Psoas muscle (tissue), 8 donors: ENCODE measurements at regions of chr14 and their contacts with region 1.

Region 1: GRCh38 chr14:63174760-63175211 is 29.5 kb upstream of the RHOJ start:
- DNase-seq: no peak
- ATAC-seq: peak in 1 of 4 donors; percentile 57
- H3K4me3 ChIP-seq: no peak overlapping the region
- H3K27ac ChIP-seq: no peak overlapping the region
- H3K4me1 ChIP-seq: no peaks in the 10 kb centered on the region
- H3K27me3 ChIP-seq: peaks cover 0 to 3% (median 0%) of the 10 kb centered on the region in 3 donors
- CTCF ChIP-seq: peak; percentile 62

Region 2: DNA sequence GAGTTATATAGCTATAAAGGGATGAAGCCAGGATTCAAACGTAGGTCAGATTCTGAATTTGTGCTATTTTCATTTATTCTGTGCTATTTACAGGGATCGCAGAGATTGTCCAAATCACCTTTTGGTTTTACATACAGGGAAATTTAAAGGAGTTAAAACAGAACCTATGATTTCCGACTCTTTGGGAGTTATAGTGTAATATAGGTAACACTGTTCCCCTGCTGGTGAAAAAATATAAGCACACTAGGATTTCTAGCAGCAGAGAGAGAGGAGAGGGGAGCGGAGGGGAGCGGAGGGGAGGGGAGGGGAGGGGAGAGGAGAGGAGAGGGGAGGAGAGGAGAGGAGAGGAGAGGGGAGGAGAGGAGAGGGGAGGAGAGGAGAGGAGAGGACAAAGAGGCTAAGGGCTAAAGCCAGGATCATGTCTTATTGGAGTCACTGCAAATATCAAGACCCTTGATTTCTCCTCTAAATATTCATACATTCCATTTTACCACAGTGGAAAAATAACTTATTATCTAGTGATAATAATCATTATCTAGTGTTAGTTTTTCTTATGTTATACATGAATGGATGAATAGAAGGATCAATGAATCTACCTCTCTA is 83.3 kb before region 1 on chr14:
- intact Hi-C with region 1: no loop called
- DNase-seq: no peak
- ATAC-seq: no peak
- H3K4me3 ChIP-seq: no peak overlapping the region
- H3K27ac ChIP-seq: no peak overlapping the region
- H3K4me1 ChIP-seq: no peaks in the 10 kb centered on the region
- H3K27me3 ChIP-seq: no peaks in the 10 kb centered on the region
- CTCF ChIP-seq: no peak

Region 3: DNA sequence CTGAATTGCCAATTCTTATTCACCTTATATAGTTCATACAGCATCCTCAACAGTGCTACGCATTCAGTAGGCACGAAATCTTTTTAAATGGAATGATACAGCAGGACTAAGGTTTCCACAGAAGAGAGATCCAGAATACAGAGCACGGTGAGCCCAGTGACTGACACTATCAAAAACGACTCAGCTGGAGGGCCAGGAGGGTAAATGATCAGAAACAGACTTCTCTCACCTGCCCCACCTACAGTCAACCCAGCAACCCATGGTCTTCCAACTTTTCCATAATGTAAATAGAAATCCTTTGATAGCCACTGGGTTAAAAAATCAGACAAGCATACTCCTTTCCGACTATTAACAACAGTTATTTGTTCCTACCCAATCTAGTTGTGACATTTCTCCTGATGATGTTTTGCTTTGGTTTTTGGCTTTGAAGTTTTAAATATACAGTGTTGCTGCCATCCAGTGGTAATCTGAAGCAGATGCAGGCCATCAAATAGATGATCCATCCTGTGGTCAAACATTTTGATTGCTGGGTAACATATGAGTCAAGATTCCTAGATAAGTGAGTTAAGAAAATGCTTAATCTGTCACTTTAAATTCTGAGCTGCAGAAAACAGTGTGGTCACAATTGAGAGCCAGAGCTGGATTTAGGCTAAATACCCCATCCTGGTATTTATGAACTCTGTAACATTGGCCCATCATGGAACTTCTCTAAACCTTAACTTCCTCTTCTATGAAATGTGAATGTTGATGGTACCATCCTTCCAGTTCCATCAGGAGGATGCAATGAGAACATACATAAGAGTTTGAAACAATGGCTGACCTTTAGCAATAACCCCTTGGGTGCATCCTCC is 101.9 kb after region 1 on chr14:
- intact Hi-C with region 1: loop called (anchors 2 to 5 kb)
- DNase-seq: no peak
- ATAC-seq: peak in 1 of 4 donors; percentile 69
- H3K4me3 ChIP-seq: no peak overlapping the region
- H3K27ac ChIP-seq: no peak overlapping the region
- H3K4me1 ChIP-seq: no peaks in the 10 kb centered on the region
- H3K27me3 ChIP-seq: peaks cover 0 to under 1% (median 0%) of the 10 kb centered on the region in 3 donors
- CTCF ChIP-seq: peak; percentile 71